ENCODE measurements at regions of chr6 and their contacts with region 1.

Region 1: DNA sequence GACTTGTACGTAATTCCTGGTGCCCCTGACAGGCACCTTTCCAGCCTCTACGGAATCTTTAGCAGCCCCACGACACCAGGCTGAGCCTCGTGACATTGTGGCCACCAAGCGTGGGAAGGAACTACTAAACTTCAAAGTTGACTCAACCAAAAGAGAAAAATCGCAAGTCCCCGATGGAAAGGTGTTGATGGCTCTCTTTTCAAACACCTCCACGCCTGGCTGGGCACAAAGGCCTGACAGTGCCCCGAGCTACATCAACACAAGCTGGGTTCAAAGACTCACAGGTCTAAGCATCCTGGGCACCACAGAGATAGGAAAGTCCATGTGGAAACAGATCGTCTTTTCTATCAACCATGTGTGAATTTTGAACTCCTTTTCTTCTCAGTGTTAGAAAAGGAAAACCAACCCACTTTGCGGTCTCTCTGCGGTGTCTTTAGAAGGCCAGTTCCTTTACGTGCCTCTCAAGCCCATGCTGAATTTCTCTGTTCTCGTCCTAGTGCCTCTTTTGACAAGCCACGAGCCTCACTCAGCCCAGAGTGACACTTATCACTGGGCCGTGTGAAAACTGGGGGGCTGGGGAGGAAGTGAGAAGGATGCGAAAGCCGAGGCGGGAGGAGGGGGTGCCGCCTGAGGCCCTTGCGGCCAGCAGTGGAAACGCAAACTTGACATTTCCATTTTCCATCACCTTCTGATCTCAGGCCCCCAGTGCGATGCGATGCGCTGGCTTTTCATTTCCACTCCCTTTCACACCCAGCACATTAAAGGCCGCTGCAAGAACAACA is 59.4 kb downstream of the GFOD1 start:
- DNase-seq: peak; percentile 88
- H3K4me3 Mint-ChIP-seq: peak overlapping the region; percentile 53
- H3K27ac Mint-ChIP-seq: peak overlapping the region; percentile 86
- H3K4me1 Mint-ChIP-seq: peaks cover 66% of the 10 kb centered on the region
- H3K27me3 Mint-ChIP-seq: no peaks in the 10 kb centered on the region

Region 2: DNA sequence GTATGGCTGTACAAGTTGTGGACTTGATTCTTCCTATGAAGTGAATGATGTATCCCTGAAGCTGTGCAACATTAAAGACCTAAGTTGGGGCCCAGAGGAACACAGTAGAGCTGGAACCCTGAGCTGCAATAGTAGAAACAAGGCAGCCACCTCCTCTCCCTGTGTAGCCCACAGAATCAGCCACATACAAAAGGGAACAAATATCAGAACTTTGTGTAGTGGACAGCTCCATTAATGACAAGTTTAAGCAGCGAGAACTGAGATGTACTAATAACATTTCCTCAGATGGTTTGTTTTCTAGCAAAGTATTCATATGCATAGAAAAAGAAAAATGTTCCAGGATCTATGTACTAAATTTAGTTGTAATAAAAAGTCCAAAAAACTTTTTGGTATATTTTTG is 692.2 kb before region 1 on chr6:
- CTCF ChIA-PET with region 1: no interaction called
- POLR2A ChIA-PET with region 1: no interaction called
- intact Hi-C with region 1: no loop called
- DNase-seq: no peak
- H3K4me3 Mint-ChIP-seq: no peak overlapping the region
- H3K27ac Mint-ChIP-seq: no peak overlapping the region
- H3K4me1 Mint-ChIP-seq: no peaks in the 10 kb centered on the region
- H3K27me3 Mint-ChIP-seq: peaks cover 1% of the 10 kb centered on the region

Region 3: GRCh38 chr6:13336553-13336952 is 91.4 kb before region 1 on chr6:
- CTCF ChIA-PET with region 1: no interaction called
- POLR2A ChIA-PET with region 1: no interaction called
- intact Hi-C with region 1: loop called (anchors 5 kb)
- DNase-seq: peak; percentile 79
- H3K4me3 Mint-ChIP-seq: no peak overlapping the region
- H3K27ac Mint-ChIP-seq: no peak overlapping the region
- H3K4me1 Mint-ChIP-seq: peaks cover 6% of the 10 kb centered on the region
- H3K27me3 Mint-ChIP-seq: no peaks in the 10 kb centered on the region

Region 4: DNA sequence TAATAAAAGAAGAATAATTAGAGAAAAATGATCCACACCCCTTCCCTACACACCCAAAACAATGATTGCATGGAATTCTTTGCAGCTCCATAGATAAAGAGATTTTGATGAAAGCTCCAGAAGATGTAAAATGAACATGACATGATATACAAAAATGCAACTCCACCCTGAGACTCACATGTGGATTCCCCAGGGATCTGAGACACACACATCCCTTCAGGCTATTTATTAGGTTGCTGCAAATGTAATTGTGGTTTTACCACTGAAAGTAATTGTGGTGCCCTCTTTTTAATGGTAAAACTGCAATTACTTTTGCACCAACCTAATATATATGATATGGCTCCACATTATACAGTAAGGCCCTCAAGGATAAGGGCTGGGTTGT is 59.3 kb before region 1 on chr6:
- CTCF ChIA-PET with region 1: no interaction called
- POLR2A ChIA-PET with region 1: no interaction called
- intact Hi-C with region 1: no loop called
- DNase-seq: no peak
- H3K4me3 Mint-ChIP-seq: no peak overlapping the region
- H3K27ac Mint-ChIP-seq: no peak overlapping the region
- H3K4me1 Mint-ChIP-seq: peaks cover 5% of the 10 kb centered on the region
- H3K27me3 Mint-ChIP-seq: no peaks in the 10 kb centered on the region

Region 5: GRCh38 chr6:13454286-13455221 is 26.6 kb after region 1 on chr6:
- CTCF ChIA-PET with region 1: interaction called, 4 read pairs
- POLR2A ChIA-PET with region 1: interaction called, 16 read pairs
- intact Hi-C with region 1: loop called (anchors 1 kb)
- DNase-seq: peak; percentile 86
- H3K4me3 Mint-ChIP-seq: peak overlapping the region; percentile 28
- H3K27ac Mint-ChIP-seq: peak overlapping the region; percentile 89
- H3K4me1 Mint-ChIP-seq: peaks cover 43% of the 10 kb centered on the region
- H3K27me3 Mint-ChIP-seq: no peaks in the 10 kb centered on the region

Region 6: DNA sequence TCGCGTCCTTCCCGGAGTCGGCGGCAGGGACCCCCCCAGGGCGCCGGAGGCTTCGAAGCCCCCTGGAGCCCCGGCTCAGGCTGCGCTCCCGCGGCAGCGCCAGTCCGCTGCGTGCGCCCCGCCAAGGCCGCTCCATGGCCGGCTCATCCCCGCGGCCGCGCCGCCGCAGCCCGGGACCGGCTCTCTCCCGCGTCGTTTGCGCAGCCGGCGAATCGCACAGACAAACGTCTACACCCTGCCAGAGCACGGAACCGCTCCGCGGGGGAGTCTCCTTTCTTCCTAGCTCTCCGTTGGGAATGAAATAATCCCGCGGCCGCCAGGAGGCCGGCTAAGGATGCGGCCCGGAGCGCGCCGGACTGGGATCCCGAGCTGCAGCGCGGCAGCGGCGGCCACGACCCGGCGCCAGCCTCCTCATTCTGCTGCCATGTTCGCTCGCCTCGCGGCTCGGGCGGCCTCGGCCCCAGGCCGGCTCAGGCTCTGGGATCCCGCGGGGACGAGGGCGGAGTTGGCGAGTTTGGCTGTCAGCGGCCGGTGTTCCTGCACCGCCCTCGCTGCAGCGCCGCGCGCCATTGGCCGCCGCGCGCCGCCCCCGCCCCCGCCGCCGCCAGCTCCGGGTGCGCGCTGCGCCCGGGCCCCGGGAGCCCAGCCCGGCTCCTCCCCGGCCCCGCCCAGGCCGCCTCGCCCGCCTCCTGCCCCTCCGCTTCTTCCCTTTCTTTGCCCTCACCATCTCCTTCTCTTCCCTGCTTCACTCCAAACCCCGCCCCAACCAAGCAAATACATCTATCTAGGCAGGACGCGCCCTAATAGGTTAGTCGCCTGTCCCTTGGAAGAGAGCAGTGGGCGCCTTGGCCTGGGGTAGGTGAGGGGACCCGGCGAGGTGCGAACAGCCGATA is 59.4 kb after region 1 on chr6 and contains the start of gene GFOD1:
- CTCF ChIA-PET with region 1: interaction called, 3 read pairs
- POLR2A ChIA-PET with region 1: interaction called, 3 read pairs
- intact Hi-C with region 1: loop called (anchors 1 kb)
- DNase-seq: peak; percentile 82
- H3K4me3 Mint-ChIP-seq: peak within 1 kb of the TSS; percentile 73
- H3K27ac Mint-ChIP-seq: peak within 1 kb of the TSS; percentile 15
- H3K4me1 Mint-ChIP-seq: peaks cover 29% of the 10 kb centered on the region
- H3K27me3 Mint-ChIP-seq: peaks cover 13% of the 10 kb centered on the region
- total RNA-seq, gene GFOD1: 2.3 to 2.4 TPM

Region 7: GRCh38 chr6:13624871-13625288 is 196.9 kb after region 1 on chr6:
- CTCF ChIA-PET with region 1: no interaction called
- POLR2A ChIA-PET with region 1: no interaction called
- intact Hi-C with region 1: no loop called
- DNase-seq: peak; percentile 25
- H3K4me3 Mint-ChIP-seq: no peak overlapping the region
- H3K27ac Mint-ChIP-seq: peak overlapping the region; percentile 40
- H3K4me1 Mint-ChIP-seq: peaks cover 20% of the 10 kb centered on the region
- H3K27me3 Mint-ChIP-seq: no peaks in the 10 kb centered on the region

Measured in activated CD4-positive, alpha-beta memory T cell treated with anti-CD3 and anti-CD28 coated beads for 36 hours (primary cell).